Left cardiac atrium (tissue), 4 donors: ENCODE measurements at regions of chr7 and their contacts with region 1.

Region 1: GRCh38 chr7:122803323-122803722 is 82.9 kb downstream of the CADPS2 start:
- DNase-seq: no peak
- ATAC-seq: peak in 1 of 2 donors; percentile 34

Region 2: DNA sequence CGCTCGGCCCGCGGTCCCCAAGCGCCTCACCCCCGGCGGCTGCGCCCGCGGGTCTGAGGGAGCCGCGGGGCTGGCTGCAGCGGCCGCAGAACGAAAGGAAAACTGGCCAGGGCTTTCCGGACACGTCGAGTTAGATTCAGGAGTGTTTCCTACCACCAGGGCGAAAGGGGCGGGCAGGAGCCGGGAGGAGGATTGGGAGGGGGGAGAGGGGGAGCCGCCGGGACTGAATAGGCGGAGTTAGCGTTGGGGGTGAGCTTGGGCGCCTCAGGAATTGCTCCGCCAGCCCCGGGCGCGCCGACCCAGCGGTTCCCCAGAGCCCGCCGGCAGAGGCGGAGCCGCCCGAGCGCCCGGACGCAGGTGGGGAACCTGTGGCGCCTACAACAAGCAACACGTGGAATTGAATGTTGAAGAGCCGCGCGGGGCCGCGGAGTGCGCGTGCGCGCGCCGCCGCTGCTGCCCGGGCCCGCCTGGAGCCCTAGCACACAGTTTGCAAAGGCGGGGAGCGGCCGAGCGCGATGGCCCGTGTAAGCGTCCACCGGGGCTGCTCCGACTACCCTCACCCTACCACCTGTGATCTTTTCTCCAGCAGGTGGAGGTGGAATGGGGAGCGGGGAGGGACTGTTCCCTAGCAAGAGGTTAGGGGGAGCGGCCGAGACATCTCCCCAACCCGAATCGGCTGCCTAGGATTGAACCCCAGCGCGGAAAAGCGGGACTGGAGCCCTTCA is 83.2 kb after region 1 on chr7 and contains the start of gene CADPS2:
- intact Hi-C with region 1: loop called in 1 of 2 experiments (anchors 5 kb)
- DNase-seq: peak; percentile 88
- ATAC-seq: peak; percentile 94 to 97
- total RNA-seq, gene CADPS2: 11.5 to 14.4 TPM